HCT116 (cell line): ENCODE measurements at regions of chr1 and their contacts with region 1.

Region 1: DNA sequence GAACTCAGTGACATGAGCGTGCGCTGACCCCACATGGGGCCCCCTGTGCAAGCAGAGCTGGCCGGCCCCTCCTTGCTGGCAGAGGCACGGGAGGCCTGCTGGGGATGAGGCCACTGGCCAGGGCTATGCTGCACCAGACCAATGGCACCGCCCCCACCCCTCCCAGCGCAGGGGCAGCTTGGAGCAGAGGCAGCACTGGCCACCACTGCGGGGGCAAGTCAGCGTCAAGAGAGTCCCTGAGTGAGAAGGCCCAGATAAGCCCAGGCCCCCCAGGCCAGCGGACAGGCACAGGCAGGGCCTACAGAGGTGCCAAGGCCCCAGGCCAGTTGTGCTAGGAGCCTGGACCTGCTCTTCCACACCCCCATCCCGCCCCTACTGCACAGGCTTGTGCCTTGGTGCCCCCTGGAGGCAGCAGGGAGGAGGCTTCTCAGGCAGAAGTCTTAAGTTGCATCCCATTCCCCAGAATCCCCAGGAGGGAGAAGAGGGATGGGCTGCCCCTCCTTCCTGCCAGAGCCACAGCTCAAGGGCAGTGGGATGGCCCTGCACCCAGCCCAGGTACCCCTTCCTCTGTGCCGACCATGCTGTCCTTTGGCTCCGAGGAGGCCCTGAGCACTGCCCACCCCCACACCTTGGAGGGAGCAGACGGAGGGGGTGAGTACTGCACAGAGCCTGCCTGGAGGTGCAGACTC is 35.8 kb downstream of the EPHX1 start:
- DNase-seq: peak; percentile 61
- ATAC-seq: peak; percentile 94
- H3K4me3 ChIP-seq: no peak overlapping the region
- H3K27ac ChIP-seq: no peak overlapping the region; the same call in 1 of the 2 replicates
- H3K4me1 ChIP-seq: 0 out of 4 replicates have a peak, but pooled peaks cover 0 to 3% of the 10 kb centered on the region in 2 experiments
- H3K27me3 ChIP-seq: no peaks in the 10 kb centered on the region
- CTCF ChIP-seq: peak; percentile 82 to 93 (median 87)
- POLR2A ChIP-seq: no peak
- RAD21 ChIP-seq: peak; percentile 95

Region 2: GRCh38 chr1:225474986-225475820 is 370.5 kb before region 1 on chr1:
- CTCF ChIA-PET with region 1: interaction called, 8 read pairs
- POLR2A ChIA-PET with region 1: no interaction called
- RAD21 ChIA-PET with region 1: no interaction called
- intact Hi-C with region 1: loop called (anchors 1 kb)
- DNase-seq: peak; percentile 40
- ATAC-seq: peak; percentile 92
- H3K4me3 ChIP-seq: no peak overlapping the region
- H3K27ac ChIP-seq: no peak overlapping the region; the same call in 1 of the 2 replicates
- H3K4me1 ChIP-seq: peaks cover 3 to 10% of the 10 kb centered on the region in 2 experiments; a peak in 3 of 4 replicates
- H3K27me3 ChIP-seq: no peaks in the 10 kb centered on the region
- CTCF ChIP-seq: peak; percentile 100
- POLR2A ChIP-seq: no peak
- RAD21 ChIP-seq: peak; percentile 100

Region 3: DNA sequence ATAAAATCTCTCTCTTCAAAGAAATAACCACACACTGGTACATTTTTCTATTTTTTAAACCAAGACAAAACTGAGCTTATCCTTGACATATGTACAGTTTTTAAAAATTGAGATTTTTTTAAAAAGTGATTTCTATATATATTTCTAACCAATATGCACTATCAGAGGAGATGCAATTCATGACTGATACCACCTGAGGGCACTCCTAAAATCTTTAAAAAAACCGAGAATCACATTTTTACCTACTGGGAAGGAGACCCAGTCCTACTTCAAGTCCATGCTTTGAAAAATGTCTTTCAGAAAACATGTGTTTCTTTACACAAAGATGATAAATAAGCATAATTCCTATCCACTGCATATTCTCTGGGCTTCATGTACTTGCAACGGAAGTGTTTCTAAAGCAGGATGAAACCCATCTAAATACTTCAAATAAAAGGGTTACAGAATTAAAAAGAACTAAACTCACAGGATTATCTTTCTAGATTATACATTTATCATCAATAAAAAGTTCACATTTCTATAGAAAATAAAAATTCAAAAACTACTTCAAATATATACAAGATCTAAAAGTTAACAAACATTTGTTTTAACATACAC is 291.4 kb before region 1 on chr1:
- CTCF ChIA-PET with region 1: no interaction called
- POLR2A ChIA-PET with region 1: no interaction called
- RAD21 ChIA-PET with region 1: no interaction called
- intact Hi-C with region 1: loop called (anchors 10 kb)
- DNase-seq: peak; percentile 18
- ATAC-seq: peak; percentile 54; the same call in 1 of the 2 replicates
- H3K4me3 ChIP-seq: no peak overlapping the region
- H3K27ac ChIP-seq: no peak overlapping the region
- H3K4me1 ChIP-seq: no peaks in the 10 kb centered on the region
- H3K27me3 ChIP-seq: no peaks in the 10 kb centered on the region
- CTCF ChIP-seq: peak; percentile 54 to 62 (median 61); a peak in 5 of 6 replicates
- POLR2A ChIP-seq: no peak
- RAD21 ChIP-seq: peak; percentile 70

Region 4: GRCh38 chr1:225777583-225778336 is 68.0 kb before region 1 on chr1 and contains the start of gene SRP9:
- CTCF ChIA-PET with region 1: no interaction called
- POLR2A ChIA-PET with region 1: no interaction called
- RAD21 ChIA-PET with region 1: interaction called in 1 of 2 experiments, 3 read pairs
- intact Hi-C with region 1: loop called (anchors 1 kb)
- DNase-seq: peak; percentile 97
- ATAC-seq: peak; percentile 96
- H3K4me3 ChIP-seq: peak within 1 kb of the TSS; percentile 87 to 95
- H3K27ac ChIP-seq: peak within 1 kb of the TSS; percentile 82
- H3K4me1 ChIP-seq: peaks cover 8 to 17% of the 10 kb centered on the region in 2 experiments; a peak in 3 of 4 replicates
- H3K27me3 ChIP-seq: no peaks in the 10 kb centered on the region
- CTCF ChIP-seq: peak; percentile 83 to 89 (median 88)
- POLR2A ChIP-seq: peak; percentile 50
- RAD21 ChIP-seq: peak; percentile 81
- total RNA-seq, gene SRP9: 220 TPM

Region 5: GRCh38 chr1:225881969-225882693 is 36.4 kb after region 1 on chr1 and contains the start of gene TMEM63A:
- CTCF ChIA-PET with region 1: no interaction called
- POLR2A ChIA-PET with region 1: no interaction called
- RAD21 ChIA-PET with region 1: no interaction called
- intact Hi-C with region 1: loop called (anchors 2 kb)
- DNase-seq: peak; percentile 64
- ATAC-seq: peak; percentile 79
- H3K4me3 ChIP-seq: peak within 1 kb of the TSS; percentile 80 to 83
- H3K27ac ChIP-seq: peak within 1 kb of the TSS; percentile 81
- H3K4me1 ChIP-seq: peaks cover 31 to 46% of the 10 kb centered on the region in 2 experiments
- H3K27me3 ChIP-seq: no peaks in the 10 kb centered on the region
- CTCF ChIP-seq: peak in 2 of 3 experiments; percentile 18 to 41; a peak in 3 of 6 replicates
- POLR2A ChIP-seq: peak; percentile 36
- RAD21 ChIP-seq: no peak
- total RNA-seq, gene TMEM63A: 24.4 TPM

Region 6: DNA sequence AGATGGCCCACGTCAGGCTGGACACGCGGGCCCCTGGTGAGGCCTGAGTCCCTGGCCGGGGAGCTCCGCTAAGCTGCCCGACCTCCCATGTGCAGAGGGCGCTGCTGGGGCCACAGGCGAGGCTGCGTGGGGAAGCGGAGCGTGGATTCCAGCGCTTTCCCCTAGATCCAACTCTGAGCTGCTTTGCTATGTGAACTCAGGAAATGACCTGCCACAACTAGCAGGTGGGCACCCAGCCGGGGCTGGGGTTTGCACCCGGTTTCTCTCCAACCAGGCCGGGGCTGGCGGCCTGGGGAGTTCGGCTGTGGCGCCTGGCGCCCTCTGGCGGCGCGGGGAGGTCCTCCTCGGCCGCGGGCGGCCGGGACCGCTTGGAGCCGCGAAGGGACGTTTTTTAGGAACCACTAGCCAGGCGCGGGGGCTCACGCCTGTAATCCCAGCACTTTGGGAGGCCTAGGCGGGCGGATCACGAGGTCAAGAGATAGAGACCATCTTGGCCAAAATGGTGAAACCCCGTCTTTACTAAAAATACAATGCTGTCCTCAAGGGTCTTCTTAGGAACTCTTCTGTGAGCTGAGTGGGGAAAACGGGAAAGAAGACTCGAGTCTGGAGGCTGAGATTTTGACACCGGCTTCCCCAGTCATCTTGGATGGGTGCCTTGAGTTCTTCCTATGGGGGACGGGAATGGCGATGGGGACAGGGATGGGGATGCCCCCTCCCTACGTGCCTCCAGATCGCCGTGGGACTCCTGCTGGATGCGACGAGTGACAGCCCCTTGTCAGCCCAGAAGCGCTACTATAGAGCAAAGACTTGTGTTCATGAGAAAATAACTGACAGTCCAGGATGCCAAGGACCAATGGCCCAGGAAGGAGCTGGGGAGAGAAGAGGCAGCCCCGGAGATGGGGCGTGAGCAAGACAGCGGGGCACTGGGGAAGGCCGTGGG is 65.7 kb after region 1 on chr1:
- CTCF ChIA-PET with region 1: no interaction called
- POLR2A ChIA-PET with region 1: no interaction called
- RAD21 ChIA-PET with region 1: no interaction called
- intact Hi-C with region 1: loop called (anchors 2 kb)
- DNase-seq: peak; percentile 34
- ATAC-seq: peak; percentile 96
- H3K4me3 ChIP-seq: peak overlapping the region in 1 of 2 experiments; percentile 38; a peak in 1 of 4 replicates
- H3K27ac ChIP-seq: no peak overlapping the region
- H3K4me1 ChIP-seq: peaks cover 0 to 11% of the 10 kb centered on the region in 2 experiments; a peak in 3 of 4 replicates
- H3K27me3 ChIP-seq: no peaks in the 10 kb centered on the region
- CTCF ChIP-seq: peak; percentile 90 to 99 (median 95)
- POLR2A ChIP-seq: no peak
- RAD21 ChIP-seq: peak; percentile 89